ENCODE measurements at regions of chr12 and their contacts with region 1.

Region 1: GRCh38 chr12:24069532-24070395 is 120.3 kb upstream of the SOX5 start:
- DNase-seq: no peak
- H3K4me3 ChIP-seq: no peak overlapping the region
- H3K27ac ChIP-seq: no peak overlapping the region
- H3K4me1 ChIP-seq: peaks cover 7% of the 10 kb centered on the region
- H3K27me3 ChIP-seq: no peaks in the 10 kb centered on the region
- CTCF ChIP-seq: no peak
- POLR2A ChIP-seq: no peak

Region 2: GRCh38 chr12:24081566-24081965 is 11.8 kb after region 1 on chr12:
- CTCF ChIA-PET with region 1: interaction called, 10 read pairs
- POLR2A ChIA-PET with region 1: no interaction called
- dilution Hi-C with region 1: no loop called
- intact Hi-C with region 1: no loop called
- DNase-seq: no peak
- H3K4me3 ChIP-seq: no peak overlapping the region
- H3K27ac ChIP-seq: no peak overlapping the region
- H3K4me1 ChIP-seq: no peaks in the 10 kb centered on the region
- H3K27me3 ChIP-seq: peaks cover 0 to 2% of the 10 kb centered on the region in 2 experiments
- CTCF ChIP-seq: no peak
- POLR2A ChIP-seq: no peak

Region 3: DNA sequence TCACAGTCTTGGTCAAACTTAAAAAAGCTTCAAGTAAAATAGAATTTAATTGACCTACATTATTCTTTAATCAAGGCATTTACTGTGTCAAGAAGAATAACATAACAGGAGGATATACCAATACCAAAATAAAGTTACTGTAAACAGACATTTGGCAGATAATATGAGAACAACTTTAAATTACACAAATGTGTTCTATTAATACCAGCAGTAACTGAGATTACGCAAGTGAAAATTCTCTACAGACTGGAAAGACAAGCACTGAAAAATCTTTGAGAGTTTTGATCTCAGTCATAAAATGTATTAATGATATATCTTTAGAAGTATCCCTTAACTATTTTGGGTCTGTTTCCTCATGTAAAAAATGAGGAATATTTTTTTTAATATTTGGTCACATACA is 48.9 kb after region 1 on chr12:
- CTCF ChIA-PET with region 1: no interaction called
- POLR2A ChIA-PET with region 1: no interaction called
- dilution Hi-C with region 1: no loop called
- intact Hi-C with region 1: no loop called
- DNase-seq: no peak
- H3K4me3 ChIP-seq: no peak overlapping the region
- H3K27ac ChIP-seq: no peak overlapping the region
- H3K4me1 ChIP-seq: no peaks in the 10 kb centered on the region
- H3K27me3 ChIP-seq: no peaks in the 10 kb centered on the region
- CTCF ChIP-seq: no peak
- POLR2A ChIP-seq: no peak

Measured in endothelial cell of umbilical vein (primary cell).